ENCODE measurements at regions of chr18 and their contacts with region 1.

Region 1: GRCh38 chr18:9334329-9334972 is at the start of gene TWSG1:
- DNase-seq: peak; percentile 85 to 87
- ATAC-seq: peak; percentile 83 to 87
- H3K4me3 ChIP-seq: peak within 1 kb of the TSS; percentile 62 to 91 (median 72)
- H3K27ac ChIP-seq: peak within 1 kb of the TSS; percentile 66 to 88 (median 78)
- H3K4me1 ChIP-seq: peaks cover 0 to 8% of the 10 kb centered on the region in 2 donors
- H3K27me3 ChIP-seq: no peaks in the 10 kb centered on the region
- CTCF ChIP-seq: peak in 4 of 5 experiments; percentile 32 to 65 (median 44)
- POLR2A ChIP-seq: peak; percentile 54 to 75
- total RNA-seq, gene TWSG1: 5.3 to 9.5 (median 8.1) TPM

Region 2: GRCh38 chr18:9066817-9067306 is 267.6 kb before region 1 on chr18:
- in situ Hi-C with region 1: loop called in 1 of 4 experiments (anchors 5 kb)
- intact Hi-C with region 1: loop called (anchors 5 kb)
- DNase-seq: no peak
- ATAC-seq: no peak
- H3K4me3 ChIP-seq: no peak overlapping the region
- H3K27ac ChIP-seq: no peak overlapping the region
- H3K4me1 ChIP-seq: peaks cover 0 to 7% of the 10 kb centered on the region in 2 donors
- H3K27me3 ChIP-seq: no peaks in the 10 kb centered on the region
- CTCF ChIP-seq: no peak
- POLR2A ChIP-seq: no peak

Region 3: DNA sequence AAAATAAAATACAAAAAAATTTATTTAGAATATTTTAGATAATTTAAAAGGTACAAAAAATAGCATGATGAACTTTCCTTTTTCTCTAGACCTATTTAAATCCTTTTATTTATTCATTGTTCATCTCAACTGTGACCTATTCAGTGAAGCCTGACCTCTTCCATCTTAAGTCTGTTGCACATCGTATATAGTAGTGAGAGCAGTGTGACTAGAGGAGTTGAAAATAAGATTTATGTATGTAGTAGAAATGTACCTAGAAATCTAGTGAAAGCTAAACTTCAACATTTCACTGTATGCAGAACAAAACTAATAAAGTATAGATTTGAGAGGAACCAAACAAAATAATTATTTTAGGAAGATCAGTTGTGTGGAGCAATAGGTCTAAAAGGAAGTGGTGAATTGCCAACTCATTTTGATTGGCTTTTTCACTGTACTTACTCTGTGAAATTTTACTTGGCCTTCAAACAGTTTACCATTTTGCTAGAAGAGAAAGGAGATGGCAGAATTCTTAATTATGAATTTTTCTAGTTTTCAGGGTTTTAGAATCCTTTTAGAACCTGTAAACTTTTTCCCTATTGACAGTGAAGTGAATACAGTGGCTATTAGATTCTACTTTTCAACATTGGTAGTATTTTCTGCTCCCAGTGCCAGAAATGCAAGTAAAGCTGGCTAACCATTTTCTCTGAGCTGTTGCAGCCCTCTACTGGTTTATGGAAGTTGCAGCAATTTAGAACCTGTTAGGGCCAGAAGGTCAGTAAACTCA is 186.8 kb before region 1 on chr18:
- in situ Hi-C with region 1: no loop called
- intact Hi-C with region 1: loop called (anchors 5 kb)
- DNase-seq: peak; percentile 26 to 39
- ATAC-seq: peak; percentile 90 to 95
- H3K4me3 ChIP-seq: no peak overlapping the region
- H3K27ac ChIP-seq: peak overlapping the region; percentile 24 to 65 (median 58)
- H3K4me1 ChIP-seq: peaks cover 76 to 78% of the 10 kb centered on the region in 2 donors
- H3K27me3 ChIP-seq: no peaks in the 10 kb centered on the region
- CTCF ChIP-seq: peak; percentile 68 to 87 (median 81)
- POLR2A ChIP-seq: no peak

Region 4: DNA sequence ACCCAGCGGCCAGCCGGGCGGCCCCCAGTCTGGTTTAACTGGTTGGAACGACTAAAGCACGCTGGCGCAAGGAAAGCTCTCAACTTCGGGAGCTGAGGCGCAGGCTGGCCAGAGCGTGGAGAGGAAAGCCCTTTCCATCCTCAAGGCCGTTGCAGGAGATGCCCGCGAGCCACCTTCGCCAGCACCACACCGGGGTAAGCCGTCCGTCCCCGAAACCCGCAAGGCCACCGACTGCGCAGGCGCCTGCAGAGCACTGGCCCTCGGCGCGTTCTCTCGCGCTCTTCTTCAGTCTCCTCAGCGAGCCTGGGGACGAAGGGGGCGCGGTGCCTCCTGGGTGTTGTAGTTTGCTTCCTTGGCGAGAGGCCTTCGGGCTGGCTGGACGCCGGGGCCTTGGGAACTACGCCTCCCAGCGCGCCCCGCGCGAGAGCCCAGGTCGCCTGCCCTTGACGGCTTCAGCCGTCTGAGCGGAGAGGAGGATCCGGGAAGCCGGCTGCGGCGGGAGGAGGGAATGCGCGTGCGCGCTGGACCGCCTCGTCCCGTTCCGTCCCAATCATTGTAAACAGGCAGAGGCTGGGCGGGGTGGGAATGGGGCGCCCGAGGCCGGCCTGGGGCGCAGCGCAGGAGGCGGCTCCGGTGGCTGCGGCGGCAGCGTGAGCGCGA is 140.7 kb after region 1 on chr18 and contains the start of gene RALBP1:
- in situ Hi-C with region 1: no loop called
- intact Hi-C with region 1: loop called (anchors 1 kb)
- DNase-seq: peak; percentile 98 to 99
- ATAC-seq: peak; percentile 94 to 95
- H3K4me3 ChIP-seq: peak within 1 kb of the TSS; percentile 72 to 94 (median 88)
- H3K27ac ChIP-seq: peak within 1 kb of the TSS; percentile 84 to 98 (median 91)
- H3K4me1 ChIP-seq: peaks cover 13 to 21% of the 10 kb centered on the region in 2 donors
- H3K27me3 ChIP-seq: no peaks in the 10 kb centered on the region
- CTCF ChIP-seq: peak in 2 of 5 experiments; percentile 23 to 36
- POLR2A ChIP-seq: peak; percentile 74 to 94
- total RNA-seq, gene RALBP1: 41.5 to 108 (median 78.1) TPM

Region 5: DNA sequence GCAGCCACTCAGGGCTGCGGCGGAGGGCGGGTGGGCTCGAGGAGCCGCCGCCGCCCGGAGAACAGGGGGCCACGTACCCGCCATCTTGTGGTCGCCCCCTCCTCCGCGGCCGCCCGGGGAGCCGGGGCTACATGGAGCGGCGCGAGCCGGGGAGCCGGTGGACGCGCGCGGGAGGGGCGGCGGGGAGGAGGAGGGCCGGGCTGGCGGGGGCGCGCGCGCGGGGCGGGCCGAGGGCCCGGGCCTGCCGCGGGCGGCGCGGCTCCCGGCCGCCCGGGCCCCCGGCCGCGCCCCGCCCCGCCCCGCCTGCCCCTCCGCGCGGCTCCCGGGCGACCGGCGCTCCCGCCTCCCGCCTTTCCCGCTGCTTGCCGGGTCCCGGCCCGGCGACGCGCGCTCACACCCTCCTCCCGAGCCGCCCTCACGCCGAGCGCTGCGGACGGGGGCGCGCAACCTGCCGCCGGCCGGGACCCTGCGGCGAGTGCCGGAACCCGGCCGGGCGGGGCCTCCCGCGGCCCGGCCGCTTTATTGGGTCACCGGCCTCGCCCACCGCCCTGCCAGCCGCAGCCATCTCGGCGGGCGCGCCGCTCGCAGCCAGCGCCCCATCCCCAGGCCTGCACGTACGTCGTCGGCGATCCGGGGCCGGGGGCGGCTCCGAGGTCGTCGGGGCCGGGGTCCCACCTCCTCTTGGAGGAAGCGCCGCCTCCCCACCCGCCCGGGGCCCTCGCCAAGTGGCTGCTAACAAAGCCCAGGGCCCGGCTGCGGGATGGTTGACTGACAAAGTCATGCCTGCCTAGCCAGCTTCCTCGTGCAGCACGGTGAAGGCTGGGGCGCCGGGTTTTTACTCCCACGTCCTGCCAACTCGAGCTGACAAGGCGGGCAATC is 280.2 kb after region 1 on chr18 and contains the start of gene PPP4R1:
- in situ Hi-C with region 1: no loop called
- intact Hi-C with region 1: loop called (anchors 2 kb)
- DNase-seq: peak; percentile 58 to 72
- ATAC-seq: peak; percentile 85 to 87
- H3K4me3 ChIP-seq: peak within 1 kb of the TSS; percentile 66 to 86 (median 76)
- H3K27ac ChIP-seq: peak within 1 kb of the TSS; percentile 84 to 91 (median 88)
- H3K4me1 ChIP-seq: peaks cover 17 to 20% of the 10 kb centered on the region in 2 donors
- H3K27me3 ChIP-seq: no peaks in the 10 kb centered on the region
- CTCF ChIP-seq: no peak
- POLR2A ChIP-seq: peak; percentile 31 to 47
- total RNA-seq, gene PPP4R1: 27.7 to 48.3 (median 32.0) TPM

Measured in gastrocnemius medialis (tissue), 4 donors.